ENCODE measurements at regions of chr9 and their contacts with region 1.

Region 1: DNA sequence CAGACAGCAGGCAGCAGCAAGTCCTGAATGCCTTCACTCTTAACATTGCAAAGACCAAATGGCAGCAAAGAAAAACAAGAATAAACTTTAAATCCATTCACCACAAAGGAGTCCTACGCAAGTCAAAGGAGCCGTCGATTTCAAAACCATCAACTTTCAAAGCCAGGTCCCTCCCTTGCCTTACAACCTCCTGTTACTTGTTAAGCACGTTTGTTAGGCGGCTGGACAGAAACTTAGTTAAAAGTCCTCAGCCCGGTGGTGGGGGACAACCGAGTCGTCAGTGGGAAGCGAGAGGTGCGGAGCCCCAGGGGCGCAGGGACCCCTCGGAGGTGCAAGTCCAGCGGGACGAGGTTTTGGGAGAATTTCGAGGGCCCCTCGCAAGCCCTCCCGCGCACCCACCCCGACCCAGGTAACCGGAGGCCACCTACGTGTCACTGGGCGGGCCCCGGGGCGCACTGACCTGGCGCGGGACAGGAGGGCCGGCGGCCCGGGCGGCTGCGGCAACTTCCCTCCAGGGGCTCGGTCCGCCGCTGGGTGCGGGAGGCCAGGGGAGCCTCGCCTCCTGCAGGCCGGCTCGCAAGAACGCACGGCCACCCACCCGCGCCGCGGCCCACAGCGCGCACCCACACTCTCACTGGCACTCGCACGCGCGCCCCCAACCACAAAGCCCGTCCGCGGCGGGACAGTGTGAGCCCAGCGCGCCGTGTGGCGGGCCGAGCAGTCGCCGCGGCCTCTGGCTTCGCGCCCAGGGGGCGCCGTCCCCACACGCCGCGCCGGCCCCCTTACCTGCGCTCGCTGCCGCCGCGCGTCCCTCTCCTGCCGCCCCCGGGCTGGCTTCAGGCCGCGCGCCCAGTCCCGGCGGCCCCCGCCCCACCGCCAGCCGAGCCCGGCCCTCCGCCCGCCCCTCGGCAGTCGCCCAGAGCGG is 627 bp downstream of the LPAR1 start:
- DNase-seq: peak; percentile 48
- H3K4me3 ChIP-seq: peak overlapping the region; percentile 59 to 87 (median 66)
- H3K27ac ChIP-seq: peak overlapping the region; percentile 41
- H3K4me1 ChIP-seq: peaks cover 35% of the 10 kb centered on the region
- H3K27me3 ChIP-seq: no peaks in the 10 kb centered on the region
- CTCF ChIP-seq: no peak

Region 2: DNA sequence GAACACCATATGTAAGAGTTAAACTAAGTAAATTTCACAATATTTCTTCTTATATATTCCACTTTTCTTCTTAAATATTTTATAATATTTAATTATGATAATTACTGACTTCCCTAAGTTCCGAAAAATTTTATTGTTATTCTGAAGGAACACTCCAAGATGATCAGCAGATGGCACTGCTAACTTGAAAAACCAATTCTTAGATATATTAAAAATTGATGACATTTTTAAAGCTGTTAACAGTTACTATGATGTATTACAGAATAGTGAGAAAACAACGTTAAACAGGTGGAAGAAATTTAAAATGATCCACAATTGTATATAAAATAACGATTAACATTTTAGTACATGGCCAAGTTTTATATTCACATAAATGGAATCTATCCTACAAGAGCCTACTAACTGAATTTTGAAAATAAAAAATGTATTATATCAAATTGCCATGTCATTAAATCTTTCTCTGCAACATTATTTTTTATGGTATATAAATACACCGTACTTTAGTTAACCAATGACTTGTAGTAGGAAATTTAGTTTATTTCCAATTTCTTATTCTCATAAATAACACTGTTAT is 399.2 kb before region 1 on chr9:
- CTCF ChIA-PET with region 1: no interaction called
- dilution Hi-C with region 1: no loop called
- in situ Hi-C with region 1: no loop called
- intact Hi-C with region 1: loop called (anchors 1 kb)
- DNase-seq: no peak
- H3K4me3 ChIP-seq: no peak overlapping the region
- H3K27ac ChIP-seq: no peak overlapping the region
- H3K4me1 ChIP-seq: no peaks in the 10 kb centered on the region
- H3K27me3 ChIP-seq: no peaks in the 10 kb centered on the region
- CTCF ChIP-seq: peak; percentile 41 to 51

Region 3: GRCh38 chr9:110911659-110912418 is 125.8 kb before region 1 on chr9:
- CTCF ChIA-PET with region 1: no interaction called
- dilution Hi-C with region 1: no loop called
- in situ Hi-C with region 1: no loop called
- intact Hi-C with region 1: loop called (anchors 5 kb)
- DNase-seq: peak; percentile 37
- H3K4me3 ChIP-seq: no peak overlapping the region
- H3K27ac ChIP-seq: no peak overlapping the region
- H3K4me1 ChIP-seq: no peaks in the 10 kb centered on the region
- H3K27me3 ChIP-seq: no peaks in the 10 kb centered on the region
- CTCF ChIP-seq: no peak

Region 4: GRCh38 chr9:110969971-110970386 is 67.7 kb before region 1 on chr9:
- CTCF ChIA-PET with region 1: no interaction called
- dilution Hi-C with region 1: no loop called
- in situ Hi-C with region 1: no loop called
- intact Hi-C with region 1: no loop called
- DNase-seq: peak; percentile 83
- H3K4me3 ChIP-seq: no peak overlapping the region
- H3K27ac ChIP-seq: peak overlapping the region; percentile 1
- H3K4me1 ChIP-seq: peaks cover 15% of the 10 kb centered on the region
- H3K27me3 ChIP-seq: no peaks in the 10 kb centered on the region
- CTCF ChIP-seq: no peak

Region 5: GRCh38 chr9:110996436-110997220 is 41.0 kb before region 1 on chr9:
- CTCF ChIA-PET with region 1: no interaction called
- dilution Hi-C with region 1: no loop called
- in situ Hi-C with region 1: no loop called
- intact Hi-C with region 1: no loop called
- DNase-seq: peak; percentile 12
- H3K4me3 ChIP-seq: no peak overlapping the region
- H3K27ac ChIP-seq: no peak overlapping the region
- H3K4me1 ChIP-seq: peaks cover 5% of the 10 kb centered on the region
- H3K27me3 ChIP-seq: no peaks in the 10 kb centered on the region
- CTCF ChIP-seq: no peak

Region 6: GRCh38 chr9:111068771-111069170 is 31.1 kb after region 1 on chr9:
- CTCF ChIA-PET with region 1: no interaction called
- dilution Hi-C with region 1: no loop called
- in situ Hi-C with region 1: no loop called
- intact Hi-C with region 1: no loop called
- DNase-seq: no peak
- H3K4me3 ChIP-seq: no peak overlapping the region
- H3K27ac ChIP-seq: no peak overlapping the region
- H3K4me1 ChIP-seq: no peaks in the 10 kb centered on the region
- H3K27me3 ChIP-seq: no peaks in the 10 kb centered on the region
- CTCF ChIP-seq: no peak

Region 7: DNA sequence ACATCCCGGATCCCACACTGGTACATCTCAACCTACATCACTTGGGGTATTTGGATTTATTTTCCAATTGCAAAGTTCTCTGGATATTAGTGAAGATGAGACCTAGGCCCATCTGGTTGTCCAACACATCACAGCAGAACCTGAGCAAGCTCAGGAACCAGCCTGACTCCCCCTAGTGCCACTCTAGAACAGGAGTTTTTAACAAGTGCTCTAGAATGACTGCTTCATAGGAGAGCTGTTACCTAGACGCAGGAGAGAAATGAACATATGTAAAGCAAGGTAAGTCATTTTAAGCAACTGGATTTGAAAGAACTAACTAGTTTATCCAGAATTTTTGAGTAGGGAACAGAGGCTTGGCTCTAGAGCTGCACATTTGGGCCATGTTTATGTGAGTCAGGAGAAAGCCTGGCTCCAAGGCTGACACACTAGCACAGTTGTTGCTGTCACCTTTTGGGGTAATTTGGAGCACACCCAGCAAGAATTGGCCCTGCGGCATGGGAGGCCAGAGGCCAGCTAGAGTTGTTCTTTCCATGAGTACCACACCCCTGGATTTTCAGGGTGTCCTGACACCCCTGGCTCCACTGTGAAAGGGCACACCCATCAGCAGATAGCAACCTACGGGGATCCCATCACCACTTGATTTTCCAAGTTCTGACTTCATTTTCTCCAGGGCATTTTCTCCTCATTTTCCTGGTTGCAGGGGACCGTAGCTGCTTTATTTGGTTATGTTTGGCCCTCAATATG is 111.5 kb after region 1 on chr9:
- CTCF ChIA-PET with region 1: no interaction called
- dilution Hi-C with region 1: no loop called
- in situ Hi-C with region 1: no loop called
- intact Hi-C with region 1: loop called (anchors 1 kb)
- DNase-seq: no peak
- H3K4me3 ChIP-seq: no peak overlapping the region
- H3K27ac ChIP-seq: no peak overlapping the region
- H3K4me1 ChIP-seq: no peaks in the 10 kb centered on the region
- H3K27me3 ChIP-seq: no peaks in the 10 kb centered on the region
- CTCF ChIP-seq: peak in 1 of 2 donors; percentile 38

Region 8: GRCh38 chr9:111399772-111400563 is 362.3 kb after region 1 on chr9:
- CTCF ChIA-PET with region 1: no interaction called
- dilution Hi-C with region 1: no loop called
- in situ Hi-C with region 1: no loop called
- intact Hi-C with region 1: loop called (anchors 2 kb)
- DNase-seq: peak; percentile 56
- H3K4me3 ChIP-seq: no peak overlapping the region
- H3K27ac ChIP-seq: no peak overlapping the region
- H3K4me1 ChIP-seq: no peaks in the 10 kb centered on the region
- H3K27me3 ChIP-seq: no peaks in the 10 kb centered on the region
- CTCF ChIP-seq: peak; percentile 59 to 88